IMR-90 (cell line): ENCODE measurements at regions of chr12 and their contacts with region 1.

Region 1: DNA sequence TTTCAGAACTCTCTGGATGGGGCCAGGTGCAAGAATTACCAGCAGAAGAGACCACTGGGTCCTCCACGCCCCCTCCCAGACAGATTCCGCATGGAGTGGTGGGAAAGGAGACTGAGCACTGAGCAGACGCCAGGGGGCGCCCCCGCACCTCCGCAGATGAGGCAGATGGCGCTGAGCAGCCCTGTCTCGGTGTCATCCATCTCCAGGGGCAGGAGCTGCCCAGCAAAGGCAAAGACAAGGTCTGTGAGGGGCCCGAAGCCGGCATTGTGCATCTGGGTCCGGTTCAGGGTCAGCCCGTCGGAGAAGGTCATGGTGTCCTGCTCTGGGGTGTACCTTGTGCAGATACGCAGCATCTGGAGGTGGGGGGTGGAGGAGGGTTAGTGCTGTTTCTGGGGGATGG is 6.3 kb upstream of the ITGB7 start:
- DNase-seq: peak; percentile 70
- ATAC-seq: peak; percentile 86
- H3K4me3 ChIP-seq: no peak overlapping the region
- H3K27ac ChIP-seq: no peak overlapping the region
- H3K4me1 ChIP-seq: peaks cover 19% of the 10 kb centered on the region
- H3K27me3 ChIP-seq: no peaks in the 10 kb centered on the region
- CTCF ChIP-seq: peak; percentile 95
- POLR2A ChIP-seq: 0 out of 2 replicates have a peak, but pooled peaks have one; percentile 32
- RAD21 ChIP-seq: peak; percentile 99

Region 2: DNA sequence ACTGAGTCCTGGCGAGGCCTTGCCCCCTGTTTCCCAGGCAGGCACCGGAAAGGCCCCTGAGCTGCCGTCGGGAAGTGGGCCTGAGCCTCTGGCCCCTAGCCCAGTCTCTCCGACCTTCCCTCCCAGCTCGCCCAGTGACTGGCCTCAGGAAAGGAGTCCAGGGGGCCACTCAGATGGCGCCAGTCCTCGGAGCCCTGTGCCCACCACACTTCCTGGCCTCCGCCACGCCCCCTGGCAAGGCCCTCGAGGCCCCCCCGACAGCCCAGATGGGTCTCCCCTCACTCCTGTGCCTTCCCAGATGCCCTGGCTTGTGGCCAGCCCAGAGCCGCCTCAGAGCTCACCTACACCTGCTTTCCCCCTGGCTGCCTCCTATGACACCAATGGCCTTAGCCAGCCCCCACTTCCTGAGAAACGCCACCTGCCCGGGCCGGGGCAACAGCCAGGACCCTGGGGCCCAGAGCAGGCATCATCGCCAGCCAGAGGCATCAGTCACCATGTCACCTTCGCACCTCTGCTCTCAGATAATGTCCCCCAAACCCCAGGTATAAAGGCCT is 152.5 kb before region 1 on chr12:
- CTCF ChIA-PET with region 1: no interaction called
- POLR2A ChIA-PET with region 1: no interaction called
- dilution Hi-C with region 1: no loop called
- in situ Hi-C with region 1: no loop called
- intact Hi-C with region 1: no loop called
- DNase-seq: no peak
- ATAC-seq: no peak
- H3K4me3 ChIP-seq: no peak overlapping the region
- H3K27ac ChIP-seq: no peak overlapping the region
- H3K4me1 ChIP-seq: peaks cover 15% of the 10 kb centered on the region; the same call in 1 of the 2 replicates
- H3K27me3 ChIP-seq: no peaks in the 10 kb centered on the region
- CTCF ChIP-seq: no peak
- POLR2A ChIP-seq: no peak
- RAD21 ChIP-seq: no peak

Region 3: DNA sequence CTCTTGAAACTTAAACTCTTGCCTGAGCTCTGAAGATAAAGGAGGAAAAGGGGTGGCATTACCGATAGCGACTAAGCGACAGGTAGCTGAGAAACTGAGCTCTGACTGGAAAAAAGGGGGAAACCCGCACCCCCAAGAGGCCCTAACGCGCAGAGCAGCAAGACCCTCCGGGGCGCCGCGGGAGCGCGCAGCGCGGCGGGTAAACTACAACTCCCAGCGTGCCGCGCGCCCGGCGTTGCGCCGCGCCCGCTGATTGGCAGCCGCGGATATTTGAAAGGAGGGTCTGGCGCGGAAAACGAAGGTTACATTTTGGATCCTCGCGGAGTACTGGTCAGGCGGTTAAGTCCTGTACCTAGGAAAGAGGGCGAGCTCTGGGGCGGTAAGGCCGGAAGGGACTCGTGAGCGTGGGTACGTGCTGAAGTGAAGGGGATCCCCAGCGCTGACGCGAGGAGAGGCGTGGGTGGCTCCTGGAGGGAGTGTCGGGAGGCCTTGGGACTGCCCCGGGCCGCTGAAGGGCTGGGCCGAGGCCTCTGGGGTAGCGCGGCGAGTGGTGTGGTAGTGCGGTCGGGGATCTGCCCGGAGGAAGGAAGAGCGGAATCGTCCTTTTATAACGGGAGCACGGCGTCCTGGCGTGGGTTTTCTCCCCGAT is 54.8 kb after region 1 on chr12 and contains the start of gene ESPL1:
- CTCF ChIA-PET with region 1: no interaction called
- POLR2A ChIA-PET with region 1: no interaction called
- dilution Hi-C with region 1: no loop called
- in situ Hi-C with region 1: no loop called
- intact Hi-C with region 1: loop called (anchors 1 kb)
- DNase-seq: peak; percentile 75
- ATAC-seq: peak; percentile 97
- H3K4me3 ChIP-seq: peak within 1 kb of the TSS; percentile 90
- H3K27ac ChIP-seq: peak within 1 kb of the TSS; percentile 58; the same call in 1 of the 2 replicates
- H3K4me1 ChIP-seq: peaks cover 7% of the 10 kb centered on the region; the same call in 1 of the 2 replicates
- H3K27me3 ChIP-seq: no peaks in the 10 kb centered on the region
- CTCF ChIP-seq: peak; percentile 38; the same call in 1 of the 2 replicates
- POLR2A ChIP-seq: peak; percentile 45; the same call in 1 of the 2 replicates
- RAD21 ChIP-seq: peak; percentile 37
- total RNA-seq, gene ESPL1: 5.6 and 6.5 TPM in 2 replicates

Region 4: DNA sequence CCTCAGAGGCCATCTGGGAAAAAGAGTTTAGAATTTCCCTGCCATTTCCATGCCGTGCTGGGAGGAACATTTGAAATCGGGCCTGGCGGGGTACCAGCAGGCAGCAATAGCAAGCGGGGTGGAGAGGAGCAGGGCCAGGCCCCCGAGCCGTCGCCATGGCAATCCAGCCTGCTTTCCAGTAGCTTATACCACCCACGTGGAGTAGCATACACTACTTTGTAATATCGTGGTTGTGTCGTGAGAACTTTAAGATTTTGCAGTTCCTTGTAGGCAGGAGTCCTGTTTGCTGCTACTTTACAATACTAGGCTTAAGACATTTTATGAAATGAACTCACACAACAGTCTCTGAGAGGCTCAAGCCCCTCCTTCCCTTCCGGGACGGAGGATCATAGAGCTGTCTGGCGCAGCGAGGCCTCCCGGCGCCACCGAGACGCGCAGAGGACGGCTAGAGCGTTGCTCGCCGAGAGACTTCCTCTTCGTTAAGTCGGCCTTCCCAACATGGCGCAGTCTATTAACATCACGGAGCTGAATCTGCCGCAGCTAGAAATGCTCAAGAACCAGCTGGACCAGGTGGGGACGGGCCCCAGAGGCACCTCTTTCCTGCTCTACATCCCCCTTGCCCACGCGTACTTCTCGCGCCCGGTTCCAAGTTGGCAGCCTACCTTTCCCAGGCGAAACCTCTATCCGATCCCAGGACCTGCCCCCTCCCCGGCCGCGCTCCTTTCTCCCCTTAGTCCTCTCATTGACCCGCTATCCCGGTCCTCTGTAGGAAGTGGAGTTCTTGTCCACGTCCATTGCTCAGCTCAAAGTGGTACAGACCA is 81.9 kb after region 1 on chr12 and contains the start of gene PFDN5:
- CTCF ChIA-PET with region 1: interaction called, 6 read pairs
- POLR2A ChIA-PET with region 1: no interaction called
- dilution Hi-C with region 1: no loop called
- in situ Hi-C with region 1: no loop called
- intact Hi-C with region 1: loop called (anchors 1 kb)
- DNase-seq: peak; percentile 92
- ATAC-seq: peak; percentile 83
- H3K4me3 ChIP-seq: peak within 1 kb of the TSS; percentile 92
- H3K27ac ChIP-seq: peak within 1 kb of the TSS; percentile 95
- H3K4me1 ChIP-seq: peaks cover 20% of the 10 kb centered on the region
- H3K27me3 ChIP-seq: no peaks in the 10 kb centered on the region
- CTCF ChIP-seq: no peak
- POLR2A ChIP-seq: peak; percentile 92
- RAD21 ChIP-seq: no peak
- total RNA-seq, gene PFDN5: 764 and 1,011 TPM in 2 replicates

Region 5: GRCh38 chr12:53344824-53345485 is 131.6 kb after region 1 on chr12:
- CTCF ChIA-PET with region 1: interaction called, 5 read pairs
- POLR2A ChIA-PET with region 1: no interaction called
- dilution Hi-C with region 1: no loop called
- in situ Hi-C with region 1: no loop called
- intact Hi-C with region 1: loop called (anchors 1 kb)
- DNase-seq: peak; percentile 72
- ATAC-seq: peak; percentile 91
- H3K4me3 ChIP-seq: peak overlapping the region; percentile 76
- H3K27ac ChIP-seq: peak overlapping the region; percentile 40
- H3K4me1 ChIP-seq: peaks cover 7% of the 10 kb centered on the region; the same call in 1 of the 2 replicates
- H3K27me3 ChIP-seq: peaks cover 11% of the 10 kb centered on the region
- CTCF ChIP-seq: peak; percentile 87
- POLR2A ChIP-seq: peak; percentile 61
- RAD21 ChIP-seq: peak; percentile 76

Region 6: DNA sequence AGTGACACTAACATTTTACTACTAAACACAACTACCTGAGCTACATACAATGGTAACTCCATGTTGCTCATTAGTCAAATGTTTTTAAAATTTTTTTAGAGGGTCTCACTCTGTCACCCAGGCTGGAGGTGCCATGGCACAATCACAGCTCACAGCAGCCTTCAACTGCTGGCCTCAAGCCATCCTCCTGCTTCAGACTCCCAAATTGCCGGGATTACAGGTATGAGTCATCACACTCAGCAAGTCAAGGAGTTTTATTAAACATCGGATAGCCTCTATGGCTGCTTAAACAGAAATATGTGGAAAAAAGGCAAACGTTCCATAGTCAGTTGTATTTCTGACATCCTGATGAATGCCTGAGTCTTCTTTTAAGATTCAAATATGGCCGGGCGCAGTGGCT is 305.0 kb after region 1 on chr12:
- CTCF ChIA-PET with region 1: no interaction called
- POLR2A ChIA-PET with region 1: no interaction called
- dilution Hi-C with region 1: no loop called
- in situ Hi-C with region 1: loop called (anchors 10 kb)
- intact Hi-C with region 1: no loop called
- DNase-seq: peak; percentile 41
- ATAC-seq: peak; percentile 16; the same call in 1 of the 2 replicates
- H3K4me3 ChIP-seq: no peak overlapping the region
- H3K27ac ChIP-seq: no peak overlapping the region
- H3K4me1 ChIP-seq: peaks cover 2% of the 10 kb centered on the region; the same call in 1 of the 2 replicates
- H3K27me3 ChIP-seq: no peaks in the 10 kb centered on the region
- CTCF ChIP-seq: no peak
- POLR2A ChIP-seq: no peak
- RAD21 ChIP-seq: no peak